IMR-90 (cell line): ENCODE measurements at regions of chr1 and their contacts with region 1.

Region 1: GRCh38 chr1:65687428-65688214 is 105.1 kb upstream of the PDE4B start:
- DNase-seq: peak; percentile 60
- ATAC-seq: peak; percentile 90
- H3K4me3 ChIP-seq: no peak overlapping the region
- H3K27ac ChIP-seq: no peak overlapping the region
- H3K4me1 ChIP-seq: peaks cover 2% of the 10 kb centered on the region; the same call in 1 of the 2 replicates
- H3K27me3 ChIP-seq: peaks cover 7% of the 10 kb centered on the region
- CTCF ChIP-seq: peak; percentile 94
- POLR2A ChIP-seq: no peak
- RAD21 ChIP-seq: peak; percentile 98

Region 2: DNA sequence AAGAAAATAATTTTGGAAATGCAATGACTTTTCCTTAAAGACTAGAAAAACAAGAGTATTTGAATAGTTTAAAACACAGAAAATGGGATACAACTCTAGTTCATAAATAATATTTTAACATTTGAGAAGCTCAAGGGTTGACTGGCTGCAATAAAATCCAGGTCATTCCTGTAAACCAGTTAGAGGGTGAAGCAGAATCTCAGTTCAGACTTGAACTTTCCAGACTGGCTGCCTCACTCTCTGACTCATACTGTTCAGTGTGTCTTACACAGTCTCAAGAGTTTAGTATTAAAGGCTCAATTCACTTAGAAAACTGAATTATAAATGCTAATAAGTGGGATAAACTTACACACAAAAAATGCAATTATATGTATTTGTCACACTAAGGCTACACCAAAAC is 852.9 kb before region 1 on chr1:
- CTCF ChIA-PET with region 1: no interaction called
- POLR2A ChIA-PET with region 1: no interaction called
- dilution Hi-C with region 1: no loop called
- in situ Hi-C with region 1: no loop called
- intact Hi-C with region 1: loop called (anchors 5 kb)
- DNase-seq: peak; percentile 79
- ATAC-seq: peak; percentile 93
- H3K4me3 ChIP-seq: no peak overlapping the region
- H3K27ac ChIP-seq: no peak overlapping the region
- H3K4me1 ChIP-seq: no peaks in the 10 kb centered on the region
- H3K27me3 ChIP-seq: no peaks in the 10 kb centered on the region
- CTCF ChIP-seq: no peak
- POLR2A ChIP-seq: no peak
- RAD21 ChIP-seq: no peak

Region 3: DNA sequence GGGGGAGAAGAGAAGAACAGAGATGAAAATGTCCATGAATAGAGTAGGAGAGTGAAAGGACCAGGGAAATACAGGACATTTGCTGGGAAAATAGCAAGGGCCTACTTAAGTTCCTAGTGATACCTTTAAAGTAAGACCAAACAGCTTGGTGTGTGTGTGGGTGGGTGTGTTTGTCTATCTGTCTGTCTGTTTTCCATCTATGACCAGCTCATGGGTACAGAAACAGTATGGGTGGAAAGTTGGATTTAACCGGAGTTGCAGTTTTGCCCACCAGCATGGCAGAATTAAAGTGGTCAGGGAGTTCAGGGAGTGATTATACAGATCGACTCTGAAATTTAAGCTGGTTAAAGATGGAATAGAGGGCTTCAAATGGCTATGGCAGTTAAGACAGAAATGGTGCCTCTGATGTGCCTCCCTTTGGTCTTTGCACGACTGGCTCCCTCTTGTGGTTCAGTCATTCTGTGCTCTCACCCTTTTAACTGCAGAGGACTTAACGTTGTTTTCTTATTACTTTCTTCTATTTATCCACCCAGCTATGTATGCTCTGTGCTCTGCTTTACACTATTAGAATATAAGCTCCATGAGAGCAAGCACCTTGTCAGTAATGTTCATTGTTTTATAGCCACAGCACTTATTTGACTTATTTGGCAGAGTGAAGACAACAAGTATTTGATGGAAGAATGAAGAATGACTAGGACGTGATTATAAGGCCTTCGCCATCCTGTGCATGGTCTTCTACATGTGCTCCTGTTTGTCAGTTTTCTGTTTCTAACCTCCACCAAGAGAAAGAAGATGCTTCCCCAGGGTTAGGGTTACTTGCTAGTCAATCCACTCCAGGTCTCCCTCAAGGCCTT is 612.3 kb before region 1 on chr1:
- CTCF ChIA-PET with region 1: interaction called, 3 read pairs
- POLR2A ChIA-PET with region 1: no interaction called
- dilution Hi-C with region 1: no loop called
- in situ Hi-C with region 1: loop called (anchors 10 kb)
- intact Hi-C with region 1: loop called (anchors 5 kb)
- DNase-seq: peak; percentile 67
- ATAC-seq: peak; percentile 91
- H3K4me3 ChIP-seq: no peak overlapping the region
- H3K27ac ChIP-seq: no peak overlapping the region
- H3K4me1 ChIP-seq: no peaks in the 10 kb centered on the region
- H3K27me3 ChIP-seq: peaks cover 6% of the 10 kb centered on the region
- CTCF ChIP-seq: peak; percentile 73
- POLR2A ChIP-seq: no peak
- RAD21 ChIP-seq: peak; percentile 68

Region 4: GRCh38 chr1:65235867-65236805 is 451.5 kb before region 1 on chr1:
- CTCF ChIA-PET with region 1: interaction called, 20 read pairs
- POLR2A ChIA-PET with region 1: no interaction called
- dilution Hi-C with region 1: no loop called
- in situ Hi-C with region 1: no loop called
- intact Hi-C with region 1: loop called (anchors 1 kb)
- DNase-seq: peak; percentile 37
- ATAC-seq: no peak
- H3K4me3 ChIP-seq: no peak overlapping the region
- H3K27ac ChIP-seq: no peak overlapping the region
- H3K4me1 ChIP-seq: no peaks in the 10 kb centered on the region
- H3K27me3 ChIP-seq: no peaks in the 10 kb centered on the region
- CTCF ChIP-seq: peak; percentile 52
- POLR2A ChIP-seq: no peak
- RAD21 ChIP-seq: peak; percentile 65

Region 5: GRCh38 chr1:65467536-65467935 is 220.1 kb before region 1 on chr1:
- CTCF ChIA-PET with region 1: no interaction called
- POLR2A ChIA-PET with region 1: no interaction called
- dilution Hi-C with region 1: no loop called
- in situ Hi-C with region 1: no loop called
- intact Hi-C with region 1: no loop called
- DNase-seq: peak; percentile 58
- ATAC-seq: peak; percentile 76
- H3K4me3 ChIP-seq: no peak overlapping the region
- H3K27ac ChIP-seq: no peak overlapping the region
- H3K4me1 ChIP-seq: peaks cover 8% of the 10 kb centered on the region
- H3K27me3 ChIP-seq: no peaks in the 10 kb centered on the region
- CTCF ChIP-seq: no peak
- POLR2A ChIP-seq: no peak
- RAD21 ChIP-seq: no peak

Region 6: DNA sequence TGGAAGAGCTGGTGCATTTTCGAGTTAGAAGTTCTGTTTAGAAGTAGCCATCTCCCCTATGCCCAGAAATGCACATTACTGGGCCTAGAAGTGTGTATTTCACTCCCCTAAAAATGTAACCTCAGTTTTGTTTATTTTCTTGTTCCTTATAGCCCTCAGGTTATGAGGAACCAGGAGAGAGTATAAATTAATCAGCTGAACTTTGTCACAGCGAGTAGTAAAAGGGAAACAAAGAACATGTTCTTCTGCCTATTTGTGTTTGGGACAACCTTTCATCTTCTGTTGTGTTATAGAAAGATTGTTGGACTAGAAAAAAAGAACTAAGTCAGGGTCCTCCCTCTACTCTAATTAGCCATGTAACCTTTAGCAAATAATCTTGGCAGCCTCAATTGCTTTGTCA is 55.4 kb before region 1 on chr1:
- CTCF ChIA-PET with region 1: no interaction called
- POLR2A ChIA-PET with region 1: no interaction called
- dilution Hi-C with region 1: no loop called
- in situ Hi-C with region 1: no loop called
- intact Hi-C with region 1: no loop called
- DNase-seq: no peak
- ATAC-seq: no peak
- H3K4me3 ChIP-seq: no peak overlapping the region
- H3K27ac ChIP-seq: no peak overlapping the region
- H3K4me1 ChIP-seq: no peaks in the 10 kb centered on the region
- H3K27me3 ChIP-seq: no peaks in the 10 kb centered on the region
- CTCF ChIP-seq: no peak
- POLR2A ChIP-seq: no peak
- RAD21 ChIP-seq: no peak

Region 7: GRCh38 chr1:65769636-65770035 is 82.0 kb after region 1 on chr1:
- CTCF ChIA-PET with region 1: no interaction called
- POLR2A ChIA-PET with region 1: no interaction called
- dilution Hi-C with region 1: no loop called
- in situ Hi-C with region 1: no loop called
- intact Hi-C with region 1: no loop called
- DNase-seq: peak; percentile 54
- ATAC-seq: no peak
- H3K4me3 ChIP-seq: no peak overlapping the region
- H3K27ac ChIP-seq: no peak overlapping the region
- H3K4me1 ChIP-seq: no peaks in the 10 kb centered on the region
- H3K27me3 ChIP-seq: no peaks in the 10 kb centered on the region
- CTCF ChIP-seq: no peak
- POLR2A ChIP-seq: no peak
- RAD21 ChIP-seq: no peak

Region 8: GRCh38 chr1:65812065-65812464 is 124.4 kb after region 1 on chr1:
- CTCF ChIA-PET with region 1: no interaction called
- POLR2A ChIA-PET with region 1: interaction called, 10 read pairs
- dilution Hi-C with region 1: no loop called
- in situ Hi-C with region 1: no loop called
- intact Hi-C with region 1: no loop called
- DNase-seq: peak; percentile 95
- ATAC-seq: peak; percentile 97
- H3K4me3 ChIP-seq: no peak overlapping the region; the same call in 1 of the 2 replicates
- H3K27ac ChIP-seq: peak overlapping the region; percentile 56
- H3K4me1 ChIP-seq: peaks cover 3% of the 10 kb centered on the region
- H3K27me3 ChIP-seq: no peaks in the 10 kb centered on the region
- CTCF ChIP-seq: no peak
- POLR2A ChIP-seq: no peak
- RAD21 ChIP-seq: peak; percentile 21; the same call in 1 of the 2 replicates